H1 (cell line): ENCODE measurements at regions of chr6 and their contacts with region 1.

Region 1: GRCh38 chr6:41846666-41847237 is 48.4 kb downstream of the USP49 start:
- DNase-seq: peak; percentile 3 to 77
- H3K4me3 ChIP-seq: no peak overlapping the region
- H3K27ac ChIP-seq: no peak overlapping the region
- H3K4me1 ChIP-seq: no peaks in the 10 kb centered on the region
- H3K27me3 ChIP-seq: no peaks in the 10 kb centered on the region
- CTCF ChIP-seq: peak in 2 of 3 experiments; percentile 70 to 85; a peak in 3 of 4 replicates
- EP300 ChIP-seq: no peak
- POLR2A ChIP-seq: no peak
- RAD21 ChIP-seq: peak; percentile 83 to 88

Region 2: GRCh38 chr6:41836022-41836659 is 10.6 kb before region 1 on chr6:
- CTCF ChIA-PET with region 1: interaction called, 19 read pairs
- POLR2A ChIA-PET with region 1: no interaction called
- DNase-seq: no peak
- H3K4me3 ChIP-seq: no peak overlapping the region
- H3K27ac ChIP-seq: no peak overlapping the region
- H3K4me1 ChIP-seq: no peaks in the 10 kb centered on the region
- H3K27me3 ChIP-seq: no peaks in the 10 kb centered on the region
- CTCF ChIP-seq: no peak
- EP300 ChIP-seq: no peak
- POLR2A ChIP-seq: no peak
- RAD21 ChIP-seq: no peak

Region 3: DNA sequence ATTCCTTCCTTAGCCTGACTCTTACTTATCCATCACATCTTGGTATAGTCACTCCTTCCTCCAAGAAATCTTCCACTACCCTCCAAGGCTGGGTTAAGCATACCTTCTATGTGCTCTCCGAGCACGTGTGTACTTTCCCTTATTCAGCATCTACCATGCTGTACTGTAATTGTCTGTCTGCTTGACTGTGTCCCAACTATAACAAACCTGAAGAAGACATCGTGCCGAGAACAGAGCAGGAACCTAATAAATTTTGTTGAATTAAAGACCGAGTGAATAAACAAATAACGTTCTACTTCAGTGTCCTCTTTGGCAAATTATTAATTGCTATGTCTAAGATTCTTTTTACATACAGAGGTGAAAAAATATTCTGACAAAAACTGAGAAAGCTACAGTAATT is 12.6 kb after region 1 on chr6:
- CTCF ChIA-PET with region 1: interaction called, 28 read pairs
- POLR2A ChIA-PET with region 1: no interaction called
- DNase-seq: no peak
- H3K4me3 ChIP-seq: no peak overlapping the region
- H3K27ac ChIP-seq: no peak overlapping the region
- H3K4me1 ChIP-seq: no peaks in the 10 kb centered on the region
- H3K27me3 ChIP-seq: no peaks in the 10 kb centered on the region
- CTCF ChIP-seq: no peak
- EP300 ChIP-seq: no peak
- POLR2A ChIP-seq: no peak
- RAD21 ChIP-seq: no peak

Region 4: GRCh38 chr6:41872147-41872546 is 25.4 kb after region 1 on chr6:
- CTCF ChIA-PET with region 1: interaction called, 26 read pairs
- POLR2A ChIA-PET with region 1: no interaction called
- DNase-seq: no peak
- H3K4me3 ChIP-seq: no peak overlapping the region
- H3K27ac ChIP-seq: no peak overlapping the region
- H3K4me1 ChIP-seq: no peaks in the 10 kb centered on the region
- H3K27me3 ChIP-seq: no peaks in the 10 kb centered on the region
- CTCF ChIP-seq: no peak
- EP300 ChIP-seq: no peak
- POLR2A ChIP-seq: no peak
- RAD21 ChIP-seq: no peak

Region 5: DNA sequence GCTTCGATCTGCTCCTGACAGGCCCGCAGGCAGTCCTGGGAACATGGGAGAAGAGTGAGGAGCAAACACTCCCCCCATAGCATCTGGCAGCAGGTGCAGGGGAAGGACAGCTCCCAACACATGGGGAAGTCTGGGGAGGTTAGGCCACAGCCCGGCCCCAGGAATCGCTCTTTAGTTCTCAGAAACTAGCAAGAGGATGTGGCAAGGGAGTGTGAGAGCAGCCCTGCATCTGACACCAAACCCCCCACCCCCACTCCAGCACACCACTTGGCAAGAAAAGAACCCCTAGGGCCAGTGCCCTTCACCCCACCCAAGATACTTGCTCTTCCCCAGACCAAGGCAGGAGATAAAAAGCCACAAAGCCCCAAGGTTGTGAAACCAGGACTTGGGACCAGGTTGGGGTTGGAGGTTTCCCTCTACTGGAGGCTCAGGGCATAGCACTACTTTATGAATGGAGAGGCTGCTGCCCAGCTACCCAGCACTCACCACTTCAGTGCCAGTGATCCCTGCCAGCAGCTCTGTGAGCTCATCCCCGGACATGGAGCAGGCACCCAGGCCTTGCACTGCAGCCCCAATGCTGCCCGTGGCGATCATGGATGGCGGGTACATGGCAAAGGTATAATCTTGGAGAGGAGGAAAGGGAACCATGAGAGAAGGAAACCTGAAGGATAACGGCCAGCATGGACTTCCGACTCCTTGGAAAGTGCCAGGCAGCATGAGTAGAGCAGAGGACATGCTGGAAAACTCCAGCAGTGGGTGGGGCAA is 89.5 kb after region 1 on chr6:
- CTCF ChIA-PET with region 1: interaction called, 33 read pairs
- POLR2A ChIA-PET with region 1: interaction called, 4 read pairs
- DNase-seq: peak in 1 of 2 experiments; percentile 78
- H3K4me3 ChIP-seq: no peak overlapping the region
- H3K27ac ChIP-seq: no peak overlapping the region
- H3K4me1 ChIP-seq: peaks cover 6 to 25% (median 21%) of the 10 kb centered on the region in 4 experiments
- H3K27me3 ChIP-seq: no peaks in the 10 kb centered on the region
- CTCF ChIP-seq: peak in 2 of 3 experiments; percentile 83 to 94; a peak in 3 of 4 replicates
- EP300 ChIP-seq: no peak
- POLR2A ChIP-seq: no peak; a peak in 1 of 3 replicates
- RAD21 ChIP-seq: peak; percentile 67 to 79

Region 6: GRCh38 chr6:42367353-42368011 is 520.7 kb after region 1 on chr6:
- CTCF ChIA-PET with region 1: no interaction called
- POLR2A ChIA-PET with region 1: no interaction called
- DNase-seq: no peak
- H3K4me3 ChIP-seq: no peak overlapping the region
- H3K27ac ChIP-seq: no peak overlapping the region
- H3K4me1 ChIP-seq: peaks cover 0 to 3% (median 0%) of the 10 kb centered on the region in 4 experiments; a peak in 3 of 7 replicates
- H3K27me3 ChIP-seq: no peaks in the 10 kb centered on the region
- CTCF ChIP-seq: no peak
- EP300 ChIP-seq: no peak
- POLR2A ChIP-seq: no peak
- RAD21 ChIP-seq: no peak